OCI-LY7 (cell line): ENCODE measurements at regions of chr6 and their contacts with region 1.

Region 1: GRCh38 chr6:110528101-110528929 is 51.9 kb upstream of the SLC22A16 start:
- DNase-seq: peak; percentile 69
- H3K4me3 ChIP-seq: no peak overlapping the region
- H3K27ac ChIP-seq: no peak overlapping the region
- H3K4me1 ChIP-seq: no peaks in the 10 kb centered on the region
- CTCF ChIP-seq: peak; percentile 95

Region 2: GRCh38 chr6:110682460-110682853 is 154.1 kb after region 1 on chr6:
- CTCF ChIA-PET with region 1: no interaction called
- POLR2A ChIA-PET with region 1: no interaction called
- intact Hi-C with region 1: loop called (anchors 1 kb)
- DNase-seq: peak; percentile 88
- H3K4me3 ChIP-seq: no peak overlapping the region
- H3K27ac ChIP-seq: no peak overlapping the region
- H3K4me1 ChIP-seq: peaks cover 12% of the 10 kb centered on the region
- CTCF ChIP-seq: peak; percentile 95

Region 3: DNA sequence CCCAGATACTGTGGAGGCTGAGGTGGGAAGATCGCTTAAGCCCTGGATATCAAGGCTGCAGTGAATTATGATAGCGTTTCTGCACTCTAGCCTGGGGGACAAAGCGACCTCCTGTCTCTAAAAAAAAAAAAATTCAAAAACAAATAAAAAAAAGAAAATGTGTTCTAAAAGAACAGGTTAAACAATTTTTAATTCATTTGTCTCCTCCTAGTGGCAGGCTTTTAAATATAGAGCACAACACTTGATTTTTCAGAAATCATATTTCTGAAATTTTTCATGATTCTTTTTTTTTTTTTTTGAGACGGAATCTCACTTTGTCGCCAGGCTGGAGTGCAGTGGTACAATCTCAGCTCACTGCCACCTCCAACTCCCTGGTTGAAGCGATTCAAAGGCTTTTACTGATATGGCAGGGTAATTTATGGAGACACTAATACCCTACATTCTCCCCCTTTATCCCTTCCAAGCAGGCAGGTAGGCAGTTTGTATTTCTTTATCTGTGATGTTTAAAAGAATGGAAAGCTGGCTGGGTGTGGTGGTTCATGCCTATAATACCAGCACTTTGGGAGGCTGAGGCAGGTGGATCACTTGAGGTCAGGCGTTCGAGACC is 421.5 kb after region 1 on chr6:
- CTCF ChIA-PET with region 1: no interaction called
- POLR2A ChIA-PET with region 1: interaction called, 3 read pairs
- intact Hi-C with region 1: loop called (anchors 1 kb)
- DNase-seq: peak; percentile 57
- H3K4me3 ChIP-seq: no peak overlapping the region
- H3K27ac ChIP-seq: no peak overlapping the region
- H3K4me1 ChIP-seq: no peaks in the 10 kb centered on the region
- CTCF ChIP-seq: peak; percentile 85

Region 4: DNA sequence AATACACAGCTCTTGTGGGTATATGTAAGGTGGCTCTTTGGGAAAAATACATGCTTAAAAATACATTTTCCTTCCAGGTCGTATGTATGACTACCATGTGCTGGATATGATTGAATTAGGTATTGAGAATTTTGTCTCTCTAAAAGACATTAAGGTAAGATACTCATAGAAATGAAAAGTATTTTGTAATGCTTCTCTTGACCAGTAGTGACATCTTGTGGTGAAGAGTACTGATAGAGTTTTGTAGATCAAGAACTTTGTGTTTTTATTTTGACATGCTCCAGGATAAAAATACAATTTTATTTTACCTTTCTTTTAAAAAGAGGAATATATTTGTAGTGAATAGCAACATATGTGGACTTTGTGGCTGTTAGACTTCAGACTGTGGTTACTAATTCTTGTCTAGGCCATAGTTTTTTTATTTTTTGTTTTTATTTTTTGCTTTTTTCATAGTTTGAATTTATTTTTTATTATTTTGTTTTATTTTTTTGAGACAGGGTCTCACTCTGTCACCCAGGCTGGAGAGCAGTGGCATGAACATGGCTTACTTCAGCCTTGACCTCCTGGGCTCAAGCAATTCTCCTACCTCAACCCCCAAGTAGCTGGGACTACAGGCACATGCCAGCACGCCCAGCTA is 471.4 kb after region 1 on chr6:
- CTCF ChIA-PET with region 1: no interaction called
- POLR2A ChIA-PET with region 1: no interaction called
- intact Hi-C with region 1: loop called (anchors 2 kb)
- DNase-seq: peak; percentile 31
- H3K4me3 ChIP-seq: no peak overlapping the region
- H3K27ac ChIP-seq: no peak overlapping the region
- H3K4me1 ChIP-seq: no peaks in the 10 kb centered on the region
- CTCF ChIP-seq: peak; percentile 77

Region 5: DNA sequence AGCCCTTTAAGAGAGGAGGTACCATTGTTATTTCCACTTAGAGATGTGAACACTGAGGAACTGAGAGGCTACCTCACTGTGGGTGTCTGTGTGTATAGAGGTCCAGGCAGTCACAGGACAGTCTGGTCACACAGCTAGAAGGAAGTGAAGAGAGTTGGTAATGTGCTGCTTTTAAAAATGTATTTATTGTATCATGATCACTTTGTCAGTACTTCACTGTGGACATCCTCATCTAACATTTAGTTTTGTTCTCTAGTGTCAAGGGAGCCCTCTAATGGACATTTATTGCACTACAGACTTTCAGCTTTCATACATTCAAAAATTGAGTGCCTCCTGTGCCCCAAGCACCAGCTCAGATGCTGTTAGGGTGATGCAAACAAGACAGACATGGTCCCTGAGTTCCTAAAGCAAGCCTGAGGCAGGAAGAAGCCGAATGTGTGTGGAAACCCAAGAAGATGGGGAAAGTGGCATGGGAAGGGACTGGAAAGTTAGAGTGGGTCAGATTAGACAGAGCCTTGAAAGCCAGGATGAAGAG is 681.9 kb after region 1 on chr6:
- CTCF ChIA-PET with region 1: no interaction called
- POLR2A ChIA-PET with region 1: no interaction called
- intact Hi-C with region 1: loop called (anchors 5 kb)
- DNase-seq: peak; percentile 62
- H3K4me3 ChIP-seq: no peak overlapping the region
- H3K27ac ChIP-seq: no peak overlapping the region
- H3K4me1 ChIP-seq: no peaks in the 10 kb centered on the region
- CTCF ChIP-seq: peak; percentile 89